Dendritic cell treated with granulocyte-macrophage colony-stimulating factor and Interleukin-4, amounts not matched to agents 40 ng/mL and 50 ng/mL, for 4 days (primary cell): ENCODE measurements at regions of chr14 and their contacts with region 1.

Region 1: DNA sequence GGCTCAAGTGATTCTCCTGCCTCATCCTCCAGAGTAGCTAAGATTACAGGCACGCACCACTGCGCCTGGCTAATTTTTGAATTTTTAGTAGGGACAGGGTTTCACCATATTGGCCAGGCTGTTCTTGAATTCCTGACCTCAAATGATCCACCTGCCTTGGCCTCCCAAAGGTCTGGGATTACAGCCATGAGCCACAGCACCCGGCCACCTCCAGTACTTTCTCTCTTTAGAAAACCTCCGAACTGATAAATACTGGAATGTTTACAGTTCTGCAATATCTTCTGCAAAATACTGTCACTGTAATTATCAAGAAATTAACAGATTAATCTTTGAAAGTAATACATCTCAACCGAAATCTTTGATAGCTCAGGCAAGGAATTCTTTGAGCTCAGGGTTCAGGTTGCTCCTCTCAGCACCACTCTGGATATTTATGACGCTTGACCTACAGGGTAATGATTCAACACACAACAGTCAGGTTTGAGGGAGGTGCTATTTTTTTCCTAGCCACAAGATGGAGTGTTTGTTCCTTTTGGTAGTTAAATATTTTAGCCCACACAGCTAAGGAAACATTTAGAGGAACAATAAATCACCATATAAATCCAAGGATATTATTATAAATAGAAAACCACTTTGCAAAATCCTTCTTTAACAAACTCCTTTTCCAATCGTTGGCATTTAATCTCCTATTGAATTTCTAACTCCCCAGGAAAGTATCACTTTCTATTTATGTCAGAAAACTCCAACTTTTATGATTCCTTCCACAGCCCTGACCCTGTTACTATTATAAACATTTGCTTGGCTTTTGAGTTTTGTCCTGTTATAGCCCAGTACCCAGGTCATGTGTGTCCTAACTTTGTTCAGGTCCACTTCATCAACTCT is 48.6 kb upstream of the GTF2A1 start:
- H3K4me3 Mint-ChIP-seq: no peak overlapping the region
- H3K27ac Mint-ChIP-seq: no peak overlapping the region
- H3K4me1 Mint-ChIP-seq: peaks cover 15% of the 10 kb centered on the region
- H3K27me3 Mint-ChIP-seq: peaks cover 8% of the 10 kb centered on the region

Region 2: DNA sequence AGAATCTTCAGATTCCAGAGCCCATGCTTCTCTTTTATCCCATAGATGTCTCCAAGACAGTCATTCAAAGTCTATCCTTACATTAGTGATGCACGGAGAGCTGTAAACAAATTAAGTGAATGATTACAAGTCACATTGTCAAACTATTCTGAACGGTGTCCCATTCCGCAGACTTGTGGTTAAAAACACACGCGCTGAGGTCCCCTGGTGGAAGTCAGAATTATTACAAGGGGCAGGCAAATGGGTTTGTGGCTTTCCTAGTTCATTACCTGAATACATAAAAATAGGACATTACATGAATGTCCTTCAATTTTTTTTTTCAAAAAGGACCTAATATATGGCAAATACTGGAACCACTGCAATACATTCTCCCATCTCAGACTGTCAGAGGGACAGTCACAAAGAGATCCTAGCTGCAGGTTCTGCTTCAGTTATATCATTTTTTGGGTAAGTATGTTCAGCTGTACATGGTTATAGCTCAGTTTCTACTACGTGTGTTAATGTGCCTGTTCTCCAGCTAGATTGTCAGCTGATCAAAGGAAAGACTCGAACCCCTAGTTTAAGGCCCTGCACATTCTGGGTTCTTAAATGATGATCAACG is 183.9 kb after region 1 on chr14:
- intact Hi-C with region 1: loop called (anchors 1 kb)
- H3K4me3 Mint-ChIP-seq: no peak overlapping the region
- H3K27ac Mint-ChIP-seq: no peak overlapping the region
- H3K4me1 Mint-ChIP-seq: peaks cover 6% of the 10 kb centered on the region
- H3K27me3 Mint-ChIP-seq: peaks cover 46% of the 10 kb centered on the region

Region 3: DNA sequence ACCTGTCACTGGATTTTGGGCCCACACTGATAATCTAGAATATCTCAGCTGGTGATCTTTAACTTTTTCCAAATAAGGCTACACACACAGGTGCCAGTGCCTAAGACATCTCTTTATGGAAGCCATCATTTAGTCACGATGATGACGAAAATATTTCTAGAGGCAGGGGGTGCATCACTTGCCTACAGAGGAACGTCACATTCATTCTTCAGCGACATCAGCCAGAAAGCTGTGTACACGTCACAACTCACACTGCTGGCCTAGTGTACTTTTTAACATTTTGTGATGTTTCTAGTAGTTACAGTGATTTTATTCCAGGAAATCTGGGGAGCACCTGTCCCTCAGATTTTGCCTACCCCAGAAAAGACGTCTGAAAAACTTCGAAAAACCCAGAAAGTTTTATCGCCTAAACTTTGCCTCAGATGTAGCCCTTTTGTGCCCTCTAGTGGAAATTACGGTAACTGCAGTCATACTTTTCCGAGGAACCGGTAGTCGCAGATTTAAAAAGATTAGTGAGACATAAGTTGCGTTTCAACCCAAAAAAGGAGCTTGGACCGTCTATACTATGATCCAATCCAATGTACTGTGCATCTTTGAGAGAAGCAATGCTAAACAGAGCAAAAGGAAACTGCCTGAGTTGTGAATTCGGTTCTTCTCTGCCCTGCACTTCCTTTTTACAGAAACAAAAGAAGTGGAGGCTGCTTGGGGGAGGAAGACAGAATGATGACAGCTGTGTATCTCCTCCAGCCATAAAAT is 195.1 kb after region 1 on chr14:
- intact Hi-C with region 1: loop called (anchors 1 kb)
- H3K4me3 Mint-ChIP-seq: peak overlapping the region; percentile 57
- H3K27ac Mint-ChIP-seq: peak overlapping the region; percentile 67
- H3K4me1 Mint-ChIP-seq: peaks cover 7% of the 10 kb centered on the region
- H3K27me3 Mint-ChIP-seq: peaks cover 3% of the 10 kb centered on the region